ENCODE measurements at regions of chr1 and their contacts with region 1.

Region 1: DNA sequence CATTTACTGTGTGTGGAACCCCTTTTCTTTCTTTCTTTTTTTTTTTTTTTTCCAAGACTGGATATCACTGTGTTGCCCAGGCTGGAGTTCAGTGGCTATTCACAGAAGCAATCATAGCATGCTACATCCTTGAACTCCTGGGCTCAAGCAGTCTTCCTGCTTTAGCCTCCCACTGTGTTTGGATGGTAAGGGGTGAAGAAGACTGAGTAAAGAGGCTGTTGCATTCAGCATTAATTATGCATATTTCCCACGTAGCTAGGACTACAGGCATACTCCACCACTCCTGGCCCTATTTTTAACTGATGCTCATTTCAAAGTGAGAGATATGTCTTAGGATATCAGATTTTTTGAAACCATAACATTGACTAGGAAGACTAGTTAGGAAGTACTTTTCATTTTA is 39.5 kb downstream of the PHACTR4 start:
- DNase-seq: no peak
- ATAC-seq: no peak
- H3K4me3 ChIP-seq: no peak overlapping the region
- H3K27ac ChIP-seq: no peak overlapping the region
- H3K4me1 ChIP-seq: no peaks in the 10 kb centered on the region
- H3K27me3 ChIP-seq: no peaks in the 10 kb centered on the region

Region 2: GRCh38 chr1:28176492-28177470 is 232.3 kb before region 1 on chr1 and contains the start of gene PTAFR:
- intact Hi-C with region 1: no loop called
- DNase-seq: peak in 2 of 3 donors; percentile 60 to 66
- ATAC-seq: peak in 1 of 2 donors; percentile 14
- H3K4me3 ChIP-seq: no peak within 1 kb of the TSS
- H3K27ac ChIP-seq: no peak within 1 kb of the TSS
- H3K4me1 ChIP-seq: no peaks in the 10 kb centered on the region
- H3K27me3 ChIP-seq: no peaks in the 10 kb centered on the region
- total RNA-seq, gene PTAFR: 2.0 to 3.6 (median 3.0) TPM

Region 3: DNA sequence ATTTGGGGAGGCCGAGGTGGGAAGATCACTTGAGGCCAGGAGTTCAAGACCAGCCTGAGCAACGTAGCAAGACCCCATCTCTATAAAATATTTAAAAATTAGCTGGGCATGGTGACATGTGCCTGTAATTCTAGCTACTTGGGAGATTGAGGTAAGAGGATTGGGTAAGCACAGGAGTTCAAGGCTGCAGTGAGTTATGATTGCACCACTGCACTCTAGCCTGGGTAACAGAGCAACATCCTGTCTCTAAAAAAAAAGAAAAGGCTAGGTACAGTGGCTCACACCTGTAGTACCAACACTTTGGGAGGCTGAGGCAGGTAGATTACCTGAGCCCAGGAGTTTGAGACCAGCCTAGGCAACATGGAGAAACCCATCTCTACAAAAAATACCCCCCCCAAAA is 61.1 kb after region 1 on chr1:
- intact Hi-C with region 1: loop called in 2 of 4 experiments (anchors 10 kb)
- DNase-seq: no peak
- ATAC-seq: no peak
- H3K4me3 ChIP-seq: no peak overlapping the region
- H3K27ac ChIP-seq: no peak overlapping the region
- H3K4me1 ChIP-seq: no peaks in the 10 kb centered on the region
- H3K27me3 ChIP-seq: no peaks in the 10 kb centered on the region